ENCODE measurements at regions of chr20 and their contacts with region 1.

Region 1: DNA sequence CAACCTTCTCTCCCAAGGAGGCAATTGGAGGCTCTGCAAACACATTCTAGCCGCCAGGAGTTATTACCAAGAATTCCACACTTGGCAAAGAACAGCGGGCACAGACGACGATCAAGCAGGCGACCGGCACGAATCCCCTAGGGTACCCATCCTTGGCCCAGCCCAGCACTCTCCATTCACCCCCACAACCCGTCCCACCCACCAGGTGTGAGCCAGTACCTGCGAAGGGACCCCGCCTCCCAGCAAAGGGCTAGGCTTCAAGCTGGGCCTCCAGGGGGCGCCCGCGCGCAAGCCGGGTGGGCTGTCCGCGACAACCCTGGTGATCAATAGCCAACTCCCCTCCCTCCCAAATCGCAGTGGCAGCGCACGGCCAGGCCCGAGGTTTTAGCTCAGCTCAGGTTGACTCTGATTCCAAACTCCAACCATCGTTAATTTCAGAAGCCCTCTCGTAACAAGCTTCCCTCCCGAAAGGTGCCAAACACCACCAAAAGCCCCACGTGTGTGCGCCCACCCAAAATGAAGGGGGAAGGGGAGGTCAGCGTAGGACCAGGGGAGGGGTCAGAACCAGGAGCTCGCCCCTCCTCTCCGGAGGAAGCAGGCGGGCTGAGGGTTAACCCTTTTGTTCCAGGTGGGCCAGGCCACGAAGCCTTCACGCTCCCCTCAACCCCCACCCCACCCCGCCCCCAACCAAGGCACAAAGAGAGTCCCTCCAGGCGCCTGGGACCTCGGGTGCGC is 2.1 kb downstream of the SALL4 start:
- ATAC-seq: peak; percentile 76 to 92 (median 87)
- H3K4me3 ChIP-seq: peak overlapping the region; percentile 43 to 89 (median 49)
- H3K27ac ChIP-seq: peak overlapping the region; percentile 73 to 84
- H3K4me1 ChIP-seq: peaks cover 21 to 25% of the 10 kb centered on the region in 2 donors

Region 2: DNA sequence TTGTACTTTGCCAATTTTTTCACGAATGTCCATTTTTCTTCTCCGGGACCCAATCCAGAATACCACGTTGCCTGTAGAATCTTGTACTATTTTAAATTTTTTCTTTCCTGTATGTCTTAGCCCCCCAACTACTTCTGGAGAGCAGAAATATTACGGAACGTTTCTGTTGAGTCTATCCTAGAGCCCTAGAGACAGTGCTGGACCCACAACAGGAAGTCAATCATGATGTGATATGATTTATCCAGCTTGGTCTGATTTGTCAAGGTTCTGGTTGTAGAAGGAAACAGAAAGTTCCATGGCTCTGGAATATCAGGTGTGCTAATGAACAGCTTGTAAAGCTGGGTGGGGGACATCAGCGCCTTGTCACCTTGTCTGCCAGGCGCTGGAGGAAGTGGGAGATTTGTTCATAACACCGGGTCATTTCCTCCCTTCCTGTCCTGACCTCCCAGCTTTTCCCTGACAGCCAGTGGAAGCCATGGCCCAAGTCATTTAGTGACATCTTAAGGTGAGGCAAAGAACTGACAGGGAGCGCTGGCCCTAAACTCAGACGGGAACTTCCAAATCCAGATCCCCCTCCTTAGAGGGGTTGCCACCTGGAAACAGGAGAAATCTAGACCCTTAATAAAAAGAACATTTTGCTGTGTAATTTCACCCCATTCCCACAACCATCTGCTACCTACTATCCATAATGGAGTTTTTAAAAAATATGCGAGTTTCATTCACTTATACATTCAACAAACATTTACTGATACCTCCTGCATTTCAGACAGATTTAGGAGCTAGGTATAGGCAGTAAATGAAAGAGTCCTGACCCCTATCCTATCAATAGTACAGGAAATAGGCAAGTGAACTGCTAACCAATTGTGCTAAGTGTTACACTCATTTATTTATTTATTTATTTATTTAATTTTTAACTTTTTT is 260.8 kb after region 1 on chr20:
- in situ Hi-C with region 1: loop called in 2 of 9 experiments (anchors 25 kb)
- ATAC-seq: peak in 6 of 8 experiments; percentile 32 to 84 (median 57)
- H3K4me3 ChIP-seq: no peak overlapping the region
- H3K27ac ChIP-seq: no peak overlapping the region
- H3K4me1 ChIP-seq: peaks cover 0 to 3% of the 10 kb centered on the region in 2 donors